ENCODE measurements at regions of chr15 and their contacts with region 1.

Region 1: DNA sequence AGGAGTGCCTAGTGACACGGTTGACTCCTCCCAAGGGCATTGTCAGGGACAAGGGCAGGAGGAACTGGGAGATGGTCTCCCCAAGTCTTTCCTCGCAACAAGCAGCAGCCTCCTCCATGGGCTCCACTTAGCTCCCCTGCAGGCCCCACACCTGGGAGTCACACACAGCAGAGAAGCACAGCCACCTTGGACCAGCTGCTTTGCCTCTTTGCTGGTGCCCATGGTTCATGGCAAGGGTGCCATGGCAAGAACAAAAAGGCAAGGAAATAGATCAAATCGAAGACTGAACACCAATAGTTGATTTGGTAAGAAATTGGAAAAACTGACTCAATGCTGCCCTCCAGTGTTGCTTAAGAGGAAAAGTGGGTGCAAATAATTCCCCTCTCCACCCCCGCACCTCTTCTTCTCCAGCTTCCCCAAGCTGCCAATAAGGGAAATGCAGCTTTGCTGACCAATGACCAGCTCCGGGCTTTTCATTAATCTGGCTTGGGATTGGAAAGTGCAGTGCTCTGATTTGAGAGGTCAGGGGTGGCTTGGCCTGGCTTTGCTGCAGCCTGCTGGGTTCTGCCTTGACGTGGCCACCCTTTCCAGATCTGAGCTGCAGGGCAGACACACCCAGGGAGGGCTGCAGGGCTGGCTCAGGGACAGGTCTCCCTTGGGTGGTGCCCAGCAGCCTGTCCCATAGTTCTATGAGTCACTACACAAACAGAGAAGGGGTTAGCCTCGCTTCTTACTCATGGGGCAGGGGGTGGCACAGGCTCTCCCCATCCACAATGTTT is 162.0 kb downstream of the KLF13 start:
- DNase-seq: peak; percentile 62 to 89
- H3K4me3 ChIP-seq: no peak overlapping the region
- CTCF ChIP-seq: peak in 2 of 3 donors; percentile 45 to 92
- POLR2A ChIP-seq: no peak

Region 2: GRCh38 chr15:31200735-31201151 is 287.9 kb before region 1 on chr15:
- intact Hi-C with region 1: loop called (anchors 5 kb)
- DNase-seq: peak; percentile 62 to 92
- H3K4me3 ChIP-seq: no peak overlapping the region
- CTCF ChIP-seq: no peak
- POLR2A ChIP-seq: no peak

Region 3: DNA sequence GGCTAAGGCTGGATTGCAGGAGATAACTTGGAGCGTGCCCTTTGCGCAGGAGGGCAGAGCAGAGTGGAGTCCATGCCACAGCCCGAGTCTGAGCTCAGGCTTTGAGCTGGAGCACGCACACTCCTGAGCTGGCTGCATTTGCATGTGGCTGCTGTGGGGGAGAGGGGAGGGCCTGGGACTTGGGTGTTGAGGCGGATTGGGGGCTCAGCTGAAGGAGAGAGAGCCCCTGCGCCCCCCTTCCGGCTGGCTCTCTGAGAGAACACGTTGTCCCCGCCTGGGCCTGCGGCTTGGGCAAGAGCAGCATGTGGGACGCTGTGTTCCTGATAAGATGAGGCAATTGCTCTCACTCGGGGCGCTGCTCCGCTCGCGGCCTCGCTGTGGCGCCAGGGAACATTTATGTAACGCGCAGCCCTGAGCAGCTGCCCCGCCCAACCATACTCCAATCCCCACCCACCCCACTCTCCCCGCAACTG is 122.9 kb before region 1 on chr15:
- intact Hi-C with region 1: loop called (anchors 5 kb)
- DNase-seq: peak; percentile 96 to 99
- H3K4me3 ChIP-seq: no peak overlapping the region
- CTCF ChIP-seq: no peak
- POLR2A ChIP-seq: no peak

Region 4: DNA sequence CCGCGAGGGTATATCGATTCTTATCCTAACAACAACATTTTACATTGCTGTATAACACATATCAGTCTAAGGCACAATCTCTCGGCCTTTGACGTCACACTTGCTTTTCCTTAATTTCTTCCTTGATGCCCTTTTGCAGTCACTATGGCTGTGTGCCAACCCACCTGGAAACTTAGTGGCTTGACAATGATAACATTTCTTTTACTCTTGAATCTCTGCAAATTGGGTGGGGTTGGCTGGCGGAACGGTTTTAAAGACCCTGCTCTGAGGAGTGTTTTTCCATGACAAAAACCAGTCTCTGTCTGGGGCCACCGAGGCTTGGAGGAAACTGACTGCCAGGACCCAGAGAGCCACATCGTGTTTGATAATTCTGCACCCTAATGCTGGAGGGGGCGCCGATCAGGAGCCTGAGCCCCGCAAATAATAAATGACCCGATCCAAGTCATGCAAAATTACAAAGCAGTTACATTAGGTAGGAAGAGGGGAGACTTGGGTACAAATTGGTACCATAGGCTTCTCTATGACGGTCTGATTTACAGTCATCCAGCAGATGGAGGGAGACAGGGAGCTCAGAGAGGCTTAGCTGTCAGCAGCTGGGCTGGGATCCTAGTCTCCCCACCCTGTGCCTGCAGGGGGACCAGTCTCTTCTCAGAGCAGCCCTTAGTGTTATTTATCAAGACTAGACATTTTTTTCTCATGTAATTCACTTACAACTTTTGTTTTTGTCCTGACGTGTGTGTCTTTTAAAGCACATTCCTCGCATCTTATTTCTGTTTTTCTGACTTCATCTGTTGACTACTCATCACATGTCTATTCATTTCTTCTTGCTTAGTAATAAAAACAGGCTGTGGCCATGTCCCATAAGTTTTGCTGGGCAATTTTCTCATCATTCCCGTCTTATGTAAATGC is 46.2 kb before region 1 on chr15:
- intact Hi-C with region 1: loop called (anchors 5 kb)
- DNase-seq: peak; percentile 74 to 90
- H3K4me3 ChIP-seq: no peak overlapping the region
- CTCF ChIP-seq: no peak
- POLR2A ChIP-seq: no peak

Region 5: GRCh38 chr15:31526916-31527690 is 38.5 kb after region 1 on chr15:
- intact Hi-C with region 1: no loop called
- DNase-seq: no peak
- H3K4me3 ChIP-seq: no peak overlapping the region
- CTCF ChIP-seq: no peak
- POLR2A ChIP-seq: no peak